HCT116 (cell line): ENCODE measurements at regions of chr10 and their contacts with region 1.

Region 1: GRCh38 chr10:117074621-117075020 is 63.4 kb downstream of the VAX1 start:
- DNase-seq: peak; percentile 52
- ATAC-seq: peak; percentile 81
- H3K4me3 ChIP-seq: no peak overlapping the region
- H3K27ac ChIP-seq: no peak overlapping the region
- H3K4me1 ChIP-seq: peaks cover 15 to 33% of the 10 kb centered on the region in 2 experiments
- H3K27me3 ChIP-seq: no peaks in the 10 kb centered on the region
- CTCF ChIP-seq: peak; percentile 58 to 88 (median 72)
- POLR2A ChIP-seq: no peak
- RAD21 ChIP-seq: peak; percentile 95

Region 2: DNA sequence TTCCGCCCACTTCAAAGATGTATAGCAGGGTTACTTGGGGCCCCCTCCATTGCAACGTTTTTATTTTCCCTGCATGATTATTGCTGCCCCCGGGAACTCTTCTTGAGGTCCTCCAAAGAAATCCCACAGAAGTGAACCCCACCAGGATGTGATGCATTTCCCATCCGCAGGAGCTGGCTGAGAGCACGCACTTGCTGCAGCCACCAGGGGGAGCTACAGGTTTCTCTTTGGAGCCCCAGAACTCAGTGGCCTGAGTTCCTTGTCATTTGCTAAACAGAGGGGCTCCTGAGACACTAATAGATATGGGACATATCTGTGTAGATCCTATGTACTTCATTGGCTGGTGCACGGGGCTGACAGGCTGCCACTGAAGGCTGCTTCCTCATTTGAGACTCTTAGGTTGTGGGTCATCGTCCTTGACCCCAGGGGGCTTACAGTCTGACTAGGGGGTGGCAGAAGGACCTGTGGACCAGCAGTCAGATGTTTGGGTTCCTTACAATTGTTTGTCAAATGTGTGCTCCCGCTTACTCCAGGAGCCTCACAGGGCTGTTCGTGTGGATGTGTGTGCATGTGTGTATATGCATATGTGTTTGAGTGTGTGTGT is 277.6 kb before region 1 on chr10:
- CTCF ChIA-PET with region 1: interaction called, 10 read pairs
- POLR2A ChIA-PET with region 1: interaction called, 3 read pairs
- RAD21 ChIA-PET with region 1: interaction called in 1 of 2 experiments, 5 read pairs
- intact Hi-C with region 1: loop called (anchors 1 kb)
- DNase-seq: peak; percentile 65
- ATAC-seq: peak; percentile 98
- H3K4me3 ChIP-seq: no peak overlapping the region
- H3K27ac ChIP-seq: no peak overlapping the region
- H3K4me1 ChIP-seq: no peaks in the 10 kb centered on the region
- H3K27me3 ChIP-seq: no peaks in the 10 kb centered on the region
- CTCF ChIP-seq: peak; percentile 98 to 100 (median 100)
- POLR2A ChIP-seq: no peak
- RAD21 ChIP-seq: peak; percentile 100

Region 3: GRCh38 chr10:116849248-116850057 is 225.2 kb before region 1 on chr10 and contains the start of gene ENO4:
- CTCF ChIA-PET with region 1: no interaction called
- POLR2A ChIA-PET with region 1: no interaction called
- RAD21 ChIA-PET with region 1: no interaction called
- intact Hi-C with region 1: loop called (anchors 2 kb)
- DNase-seq: peak; percentile 90
- ATAC-seq: peak; percentile 93
- H3K4me3 ChIP-seq: peak within 1 kb of the TSS; percentile 84 to 88
- H3K27ac ChIP-seq: peak within 1 kb of the TSS; percentile 59
- H3K4me1 ChIP-seq: peaks cover 11 to 32% of the 10 kb centered on the region in 2 experiments
- H3K27me3 ChIP-seq: no peaks in the 10 kb centered on the region
- CTCF ChIP-seq: no peak
- POLR2A ChIP-seq: peak; percentile 83
- RAD21 ChIP-seq: no peak
- total RNA-seq, gene ENO4: 0.22 TPM

Region 4: GRCh38 chr10:116947842-116948529 is 126.6 kb before region 1 on chr10:
- CTCF ChIA-PET with region 1: interaction called, 4 read pairs
- POLR2A ChIA-PET with region 1: no interaction called
- RAD21 ChIA-PET with region 1: no interaction called
- intact Hi-C with region 1: loop called (anchors 10 kb)
- DNase-seq: peak; percentile 59
- ATAC-seq: peak; percentile 64
- H3K4me3 ChIP-seq: peak overlapping the region in 1 of 2 experiments; percentile 17; a peak in 1 of 4 replicates
- H3K27ac ChIP-seq: peak overlapping the region; percentile 43
- H3K4me1 ChIP-seq: peaks cover 22 to 23% of the 10 kb centered on the region in 2 experiments
- H3K27me3 ChIP-seq: no peaks in the 10 kb centered on the region
- CTCF ChIP-seq: no peak
- POLR2A ChIP-seq: no peak
- RAD21 ChIP-seq: no peak

Region 5: DNA sequence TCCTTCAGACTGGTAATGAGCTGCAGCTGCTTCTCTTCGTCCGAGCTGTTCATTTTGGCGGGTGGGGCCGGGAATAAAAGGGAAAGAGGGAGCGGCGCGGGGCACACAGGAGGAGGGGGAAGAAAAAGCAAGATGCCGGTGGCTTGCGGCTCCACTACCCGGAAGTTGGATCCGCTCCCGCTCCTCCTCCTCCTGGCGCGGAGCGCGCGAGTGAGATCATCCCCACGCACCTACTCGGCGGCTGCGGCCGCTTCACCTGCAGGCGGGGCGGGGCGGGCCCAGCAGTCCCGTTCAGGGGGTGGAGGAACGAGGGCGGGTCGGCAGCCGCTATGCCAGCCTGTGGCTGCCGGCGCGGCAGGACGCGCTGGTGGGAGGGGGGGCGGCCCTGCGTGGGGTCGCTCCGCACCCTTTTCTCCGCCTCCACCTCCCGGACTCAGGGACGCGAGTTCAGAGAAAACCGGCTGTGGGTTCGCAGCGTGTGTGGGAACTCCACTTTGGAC is 69.5 kb before region 1 on chr10 and contains the start of gene SHTN1:
- CTCF ChIA-PET with region 1: no interaction called
- POLR2A ChIA-PET with region 1: interaction called, 3 read pairs
- RAD21 ChIA-PET with region 1: interaction called in 1 of 2 experiments, 3 read pairs
- intact Hi-C with region 1: loop called (anchors 2 kb)
- DNase-seq: peak; percentile 84
- ATAC-seq: peak; percentile 89
- H3K4me3 ChIP-seq: peak within 1 kb of the TSS; percentile 85 to 89
- H3K27ac ChIP-seq: peak within 1 kb of the TSS; percentile 92
- H3K4me1 ChIP-seq: peaks cover 25 to 36% of the 10 kb centered on the region in 2 experiments
- H3K27me3 ChIP-seq: no peaks in the 10 kb centered on the region
- CTCF ChIP-seq: no peak
- POLR2A ChIP-seq: peak; percentile 56
- RAD21 ChIP-seq: no peak
- total RNA-seq, gene SHTN1: 64.0 TPM